Dendritic cell treated with granulocyte-macrophage colony-stimulating factor and Interleukin-4, amounts not matched to agents 40 ng/mL and 50 ng/mL, for 4 days (primary cell): ENCODE measurements at regions of chr1 and their contacts with region 1.

Region 1: GRCh38 chr1:185170291-185170848 is 13.4 kb downstream of the SWT1 start:
- H3K4me3 Mint-ChIP-seq: no peak overlapping the region
- H3K27ac Mint-ChIP-seq: no peak overlapping the region
- H3K4me1 Mint-ChIP-seq: peaks cover 5% of the 10 kb centered on the region
- H3K27me3 Mint-ChIP-seq: no peaks in the 10 kb centered on the region

Region 2: DNA sequence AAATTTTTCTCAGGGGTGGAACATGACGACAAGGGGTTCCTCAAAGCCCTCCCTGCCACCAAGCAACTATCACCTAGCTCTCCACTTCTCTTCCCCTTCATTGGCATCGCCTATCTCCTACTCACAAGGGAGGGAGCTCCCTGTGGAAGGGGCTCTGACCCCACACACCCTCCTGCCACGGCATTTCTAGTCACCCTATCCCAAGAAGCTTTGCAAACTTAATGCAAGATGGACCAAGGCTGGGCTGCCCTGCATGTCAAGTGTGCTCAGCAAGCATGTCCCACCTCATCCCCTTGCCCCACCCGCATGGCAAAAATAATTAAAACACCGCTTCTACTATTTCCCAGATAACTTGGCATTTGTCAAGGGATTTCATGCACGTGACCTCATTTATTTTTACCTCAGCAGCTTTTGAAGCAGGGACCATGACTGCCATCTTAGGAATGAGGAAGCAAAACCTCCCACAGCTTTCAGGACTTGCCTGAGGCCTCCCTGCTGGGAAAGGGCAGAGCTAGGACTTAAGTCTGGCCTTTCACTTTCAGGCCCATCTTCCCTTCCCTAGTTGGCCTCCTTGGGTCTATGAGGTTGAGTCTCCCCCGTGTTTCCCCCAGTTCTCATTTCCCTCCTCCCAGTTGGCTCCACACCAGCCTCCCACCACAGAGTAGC is 957.6 kb before region 1 on chr1:
- intact Hi-C with region 1: no loop called
- H3K4me3 Mint-ChIP-seq: no peak overlapping the region
- H3K27ac Mint-ChIP-seq: peak overlapping the region; percentile 83
- H3K4me1 Mint-ChIP-seq: peaks cover 23% of the 10 kb centered on the region
- H3K27me3 Mint-ChIP-seq: no peaks in the 10 kb centered on the region

Region 3: DNA sequence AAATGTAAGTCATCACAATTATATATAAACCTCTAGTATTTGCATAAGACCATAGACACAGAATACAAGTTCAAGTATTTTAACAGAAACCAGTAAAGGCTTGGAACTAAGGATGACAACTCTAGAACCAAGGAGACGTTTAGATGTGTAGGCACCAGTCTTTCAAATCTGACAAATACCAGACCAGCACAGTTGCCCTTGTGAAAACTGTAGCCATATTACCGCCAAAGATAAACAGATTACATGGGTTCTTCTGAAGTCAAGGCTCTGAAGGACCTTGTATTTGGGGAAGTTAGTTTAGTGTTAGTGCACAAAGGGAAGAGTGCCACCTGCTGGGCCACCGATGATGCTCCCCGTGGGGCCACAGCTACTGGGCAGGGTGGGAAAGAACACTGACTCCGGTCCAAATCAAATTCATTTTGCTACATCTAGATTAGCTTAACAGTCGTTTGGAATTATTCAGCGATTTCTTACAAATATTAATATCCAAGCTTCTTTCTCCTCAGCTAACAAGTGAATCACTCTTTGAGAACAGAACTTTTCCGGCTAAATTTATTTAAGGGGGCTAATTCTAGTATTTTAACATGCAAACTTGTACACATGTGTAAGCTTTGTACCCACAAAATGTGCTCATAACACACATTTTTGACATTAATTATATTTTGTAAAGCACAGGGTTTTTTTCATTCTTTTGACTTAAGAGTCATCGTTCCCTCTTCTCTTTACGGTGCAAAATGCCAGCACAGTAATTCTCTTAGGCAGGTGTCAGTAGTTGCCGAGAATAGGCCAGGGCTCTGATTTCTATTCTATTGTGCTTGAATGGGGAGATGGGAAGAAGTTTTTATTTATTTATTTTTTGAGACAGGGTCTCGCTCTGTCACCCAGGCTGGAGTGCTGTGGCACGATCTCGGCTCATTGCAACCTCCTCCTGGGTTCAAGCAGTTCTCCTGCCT is 188.1 kb before region 1 on chr1:
- intact Hi-C with region 1: loop called (anchors 5 kb)
- H3K4me3 Mint-ChIP-seq: no peak overlapping the region
- H3K27ac Mint-ChIP-seq: no peak overlapping the region
- H3K4me1 Mint-ChIP-seq: peaks cover 7% of the 10 kb centered on the region
- H3K27me3 Mint-ChIP-seq: no peaks in the 10 kb centered on the region